IMR-90 (cell line): ENCODE measurements at regions of chr18 and their contacts with region 1.

Region 1: GRCh38 chr18:51668101-51668500 is 470.6 kb upstream of the MEX3C start:
- DNase-seq: peak; percentile 4
- ATAC-seq: no peak
- H3K4me3 ChIP-seq: no peak overlapping the region
- H3K27ac ChIP-seq: no peak overlapping the region
- H3K4me1 ChIP-seq: no peaks in the 10 kb centered on the region
- H3K27me3 ChIP-seq: no peaks in the 10 kb centered on the region
- CTCF ChIP-seq: peak; percentile 53
- POLR2A ChIP-seq: no peak
- RAD21 ChIP-seq: peak; percentile 66

Region 2: GRCh38 chr18:51110073-51110803 is 557.9 kb before region 1 on chr18:
- CTCF ChIA-PET with region 1: no interaction called
- POLR2A ChIA-PET with region 1: no interaction called
- dilution Hi-C with region 1: no loop called
- in situ Hi-C with region 1: no loop called
- intact Hi-C with region 1: loop called (anchors 5 kb)
- DNase-seq: peak; percentile 5
- ATAC-seq: peak; percentile 100
- H3K4me3 ChIP-seq: no peak overlapping the region
- H3K27ac ChIP-seq: no peak overlapping the region
- H3K4me1 ChIP-seq: no peaks in the 10 kb centered on the region; the same call in 1 of the 2 replicates
- H3K27me3 ChIP-seq: no peaks in the 10 kb centered on the region
- CTCF ChIP-seq: peak; percentile 87
- POLR2A ChIP-seq: peak; percentile 34; the same call in 1 of the 2 replicates
- RAD21 ChIP-seq: peak; percentile 96

Region 3: DNA sequence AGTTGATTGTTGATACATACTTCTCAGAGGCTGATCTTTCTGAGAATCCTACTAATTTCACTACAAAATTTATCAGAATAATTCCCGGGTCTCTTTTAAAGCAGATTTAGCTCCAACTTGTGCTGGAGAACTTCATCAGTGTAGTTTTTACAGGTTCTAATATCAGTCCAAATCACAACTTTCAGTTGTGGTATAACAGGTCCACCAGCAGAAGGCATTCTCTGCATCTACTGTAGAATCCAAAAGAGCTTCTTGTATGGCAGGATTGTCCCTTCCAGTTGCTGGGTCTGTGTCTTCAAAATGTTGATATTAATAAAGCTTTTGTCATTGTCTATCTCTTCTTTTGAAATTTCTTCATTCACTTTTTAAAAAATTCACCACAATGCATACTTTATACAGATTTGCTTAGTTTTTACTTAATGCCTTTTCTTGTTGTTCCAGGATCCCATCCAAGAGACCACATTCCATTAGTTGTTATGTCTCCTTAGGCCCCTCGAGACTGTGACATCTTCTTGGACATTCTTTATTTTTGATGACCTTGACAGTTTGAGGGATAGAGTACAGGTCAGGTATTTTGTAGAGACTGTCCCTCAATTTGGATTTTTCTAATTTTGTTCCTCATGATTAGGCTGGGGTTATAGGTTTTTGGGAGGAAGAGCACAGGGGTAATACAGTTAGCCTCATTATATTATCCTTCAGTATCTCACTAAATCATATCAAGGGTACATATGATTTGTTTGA is 19.9 kb after region 1 on chr18:
- CTCF ChIA-PET with region 1: no interaction called
- POLR2A ChIA-PET with region 1: no interaction called
- dilution Hi-C with region 1: no loop called
- in situ Hi-C with region 1: no loop called
- intact Hi-C with region 1: no loop called
- DNase-seq: no peak
- ATAC-seq: no peak
- H3K4me3 ChIP-seq: no peak overlapping the region
- H3K27ac ChIP-seq: no peak overlapping the region
- H3K4me1 ChIP-seq: no peaks in the 10 kb centered on the region
- H3K27me3 ChIP-seq: no peaks in the 10 kb centered on the region
- CTCF ChIP-seq: no peak
- POLR2A ChIP-seq: no peak
- RAD21 ChIP-seq: no peak

Region 4: DNA sequence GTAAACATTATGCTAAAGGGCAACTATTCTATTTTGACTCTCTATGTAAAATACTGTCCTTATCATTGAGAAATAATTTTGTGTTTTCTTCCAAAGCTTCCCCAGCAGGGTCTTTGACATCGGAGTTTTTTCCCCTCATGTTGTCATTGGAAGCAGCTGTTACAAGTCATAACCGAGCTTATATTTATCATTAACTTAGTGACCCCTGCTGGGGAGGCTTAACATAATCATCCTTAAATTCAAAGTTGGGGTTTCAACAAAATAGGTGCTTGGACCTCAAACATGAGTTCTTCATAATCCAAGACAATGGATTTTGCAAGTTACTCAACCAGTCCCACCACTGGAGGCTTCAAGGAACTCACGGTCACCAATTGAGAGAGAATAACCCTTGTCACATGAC is 1002.8 kb after region 1 on chr18:
- CTCF ChIA-PET with region 1: no interaction called
- POLR2A ChIA-PET with region 1: no interaction called
- dilution Hi-C with region 1: no loop called
- in situ Hi-C with region 1: loop called (anchors 25 kb)
- intact Hi-C with region 1: loop called (anchors 5 kb)
- DNase-seq: peak; percentile 5
- ATAC-seq: no peak
- H3K4me3 ChIP-seq: no peak overlapping the region
- H3K27ac ChIP-seq: no peak overlapping the region
- H3K4me1 ChIP-seq: no peaks in the 10 kb centered on the region
- H3K27me3 ChIP-seq: no peaks in the 10 kb centered on the region
- CTCF ChIP-seq: peak; percentile 31; the same call in 1 of the 2 replicates
- POLR2A ChIP-seq: no peak
- RAD21 ChIP-seq: peak; percentile 43

Region 5: GRCh38 chr18:52694804-52695203 is 1026.7 kb after region 1 on chr18:
- CTCF ChIA-PET with region 1: no interaction called
- POLR2A ChIA-PET with region 1: no interaction called
- dilution Hi-C with region 1: no loop called
- in situ Hi-C with region 1: loop called (anchors 25 kb)
- intact Hi-C with region 1: no loop called
- DNase-seq: no peak
- ATAC-seq: peak; percentile 46
- H3K4me3 ChIP-seq: no peak overlapping the region
- H3K27ac ChIP-seq: no peak overlapping the region
- H3K4me1 ChIP-seq: no peaks in the 10 kb centered on the region
- H3K27me3 ChIP-seq: no peaks in the 10 kb centered on the region
- CTCF ChIP-seq: peak; percentile 38
- POLR2A ChIP-seq: no peak
- RAD21 ChIP-seq: peak; percentile 35; the same call in 1 of the 2 replicates